ENCODE measurements at regions of chr3 and their contacts with region 1.

Region 1: DNA sequence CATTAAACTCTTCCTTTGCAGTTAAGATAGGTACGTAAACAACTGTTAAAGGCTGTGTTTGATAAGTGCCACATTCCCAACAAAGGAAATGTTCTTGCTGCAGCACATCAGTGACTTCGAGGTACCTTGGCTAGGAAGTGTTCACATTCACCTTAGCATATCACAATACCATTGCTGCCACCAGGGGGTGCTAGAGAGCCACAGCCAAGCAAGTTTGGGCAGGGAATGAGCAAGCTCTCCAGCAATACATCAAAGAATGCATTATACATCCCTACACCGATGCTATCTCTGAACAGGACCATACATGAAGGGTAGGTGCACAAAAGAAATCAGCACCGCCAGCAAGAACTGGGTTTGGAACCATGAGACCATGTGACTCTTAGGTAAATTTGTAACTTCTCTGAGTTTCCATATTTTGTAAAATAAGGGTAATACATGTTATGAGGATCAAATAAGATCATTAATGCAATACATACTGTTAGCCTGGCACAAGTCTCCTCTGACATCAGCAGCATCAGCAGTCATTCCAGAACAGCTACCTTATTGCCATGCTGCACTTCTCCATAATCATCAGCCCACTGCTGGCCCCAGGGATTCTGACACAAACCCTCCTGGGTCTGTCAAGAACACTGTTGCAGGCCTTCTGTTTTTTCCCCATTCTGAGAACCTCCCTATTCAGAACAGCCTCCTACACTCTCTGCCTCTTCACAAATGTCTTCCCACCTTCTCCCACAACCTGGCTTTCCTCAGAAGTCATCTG is 37.6 kb downstream of the RYK start:
- DNase-seq: peak; percentile 87
- H3K4me3 Mint-ChIP-seq: no peak overlapping the region
- H3K27ac Mint-ChIP-seq: peak overlapping the region; percentile 36
- H3K4me1 Mint-ChIP-seq: peaks cover 26% of the 10 kb centered on the region
- H3K27me3 Mint-ChIP-seq: no peaks in the 10 kb centered on the region
- CTCF ChIP-seq: peak; percentile 91

Region 2: DNA sequence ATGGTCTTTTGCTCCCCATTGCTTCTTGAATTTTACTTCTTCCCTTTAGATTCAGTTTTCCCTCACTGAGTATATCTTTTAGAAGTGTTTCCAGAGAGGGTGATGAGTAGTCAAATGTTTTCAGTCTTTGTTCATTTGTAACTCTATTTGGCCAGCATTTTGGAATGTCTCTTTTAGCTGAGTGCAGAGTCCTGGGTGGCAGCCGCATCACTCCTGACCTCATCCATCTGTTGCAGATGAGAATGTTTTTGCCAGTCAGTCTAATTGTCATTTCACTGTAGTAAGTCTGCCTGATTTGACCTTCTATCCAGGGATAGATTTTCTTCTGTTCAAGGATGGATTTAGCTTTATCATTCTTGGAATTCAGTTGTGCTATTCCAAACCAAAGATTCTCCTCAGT is 400.2 kb before region 1 on chr3:
- CTCF ChIA-PET with region 1: interaction called, 12 read pairs
- POLR2A ChIA-PET with region 1: no interaction called
- intact Hi-C with region 1: loop called (anchors 10 kb)
- DNase-seq: no peak
- H3K4me3 Mint-ChIP-seq: no peak overlapping the region
- H3K27ac Mint-ChIP-seq: no peak overlapping the region
- H3K4me1 Mint-ChIP-seq: peaks cover 18% of the 10 kb centered on the region
- H3K27me3 Mint-ChIP-seq: no peaks in the 10 kb centered on the region
- CTCF ChIP-seq: no peak

Region 3: GRCh38 chr3:133937756-133938601 is 275.1 kb before region 1 on chr3:
- CTCF ChIA-PET with region 1: interaction called, 68 read pairs
- POLR2A ChIA-PET with region 1: no interaction called
- intact Hi-C with region 1: no loop called
- DNase-seq: no peak
- H3K4me3 Mint-ChIP-seq: no peak overlapping the region
- H3K27ac Mint-ChIP-seq: no peak overlapping the region
- H3K4me1 Mint-ChIP-seq: peaks cover 17% of the 10 kb centered on the region
- H3K27me3 Mint-ChIP-seq: no peaks in the 10 kb centered on the region
- CTCF ChIP-seq: no peak

Region 4: DNA sequence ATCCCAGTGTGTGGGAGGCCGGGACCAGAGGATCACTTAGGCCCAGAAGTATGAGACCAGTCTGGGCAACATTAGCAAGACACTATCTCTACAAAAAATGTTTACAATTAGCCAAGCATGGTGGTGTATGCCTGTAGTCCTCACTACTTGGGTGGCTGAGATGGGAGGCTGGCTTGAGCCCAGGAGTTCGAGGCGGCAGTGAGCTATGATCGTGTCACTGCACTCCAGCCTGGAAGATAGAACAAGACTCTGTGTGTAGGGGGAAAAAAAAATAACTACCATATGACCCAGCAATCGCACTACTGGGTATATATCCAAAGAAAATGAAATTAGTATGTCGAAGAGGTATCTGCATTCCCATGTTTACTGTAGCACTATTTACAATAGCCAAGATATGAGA is 14.9 kb after region 1 on chr3:
- CTCF ChIA-PET with region 1: interaction called, 103 read pairs
- POLR2A ChIA-PET with region 1: interaction called, 14 read pairs
- intact Hi-C with region 1: no loop called
- DNase-seq: no peak
- H3K4me3 Mint-ChIP-seq: no peak overlapping the region
- H3K27ac Mint-ChIP-seq: no peak overlapping the region
- H3K4me1 Mint-ChIP-seq: peaks cover 33% of the 10 kb centered on the region
- H3K27me3 Mint-ChIP-seq: no peaks in the 10 kb centered on the region
- CTCF ChIP-seq: no peak

Region 5: DNA sequence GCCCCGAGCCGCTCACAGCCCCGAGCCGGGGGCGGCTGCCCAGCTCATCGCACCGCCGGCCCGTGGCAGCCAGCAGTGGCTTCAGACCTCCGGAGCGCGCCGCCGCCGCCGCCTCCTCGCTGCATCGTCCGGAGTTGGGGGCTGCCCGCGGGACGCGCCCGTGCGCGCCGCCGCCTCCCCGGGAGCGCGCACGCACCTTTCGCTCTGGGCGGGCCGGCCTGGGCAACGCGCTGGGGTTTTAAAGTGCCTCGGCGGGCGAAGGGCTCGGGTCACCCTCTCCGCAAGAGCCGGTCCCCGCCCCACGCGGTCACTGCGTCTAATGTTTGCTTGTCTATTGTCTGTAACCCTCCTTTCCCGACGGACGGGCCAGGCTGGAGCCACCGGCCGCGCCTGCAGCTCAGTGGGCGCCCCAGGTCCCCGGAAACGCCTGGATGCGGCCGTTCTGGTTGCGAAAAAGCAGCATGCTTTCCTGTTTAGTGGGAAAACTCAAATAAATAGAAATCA is 37.7 kb after region 1 on chr3 and contains the start of gene RYK:
- CTCF ChIA-PET with region 1: interaction called, 41 read pairs
- POLR2A ChIA-PET with region 1: interaction called, 13 read pairs
- intact Hi-C with region 1: loop called (anchors 1 kb)
- DNase-seq: peak; percentile 69
- H3K4me3 Mint-ChIP-seq: peak within 1 kb of the TSS; percentile 79
- H3K27ac Mint-ChIP-seq: peak within 1 kb of the TSS; percentile 84
- H3K4me1 Mint-ChIP-seq: peaks cover 7% of the 10 kb centered on the region
- H3K27me3 Mint-ChIP-seq: no peaks in the 10 kb centered on the region
- CTCF ChIP-seq: no peak
- total RNA-seq, gene RYK: 76.1 and 79.8 TPM in 2 replicates

Region 6: DNA sequence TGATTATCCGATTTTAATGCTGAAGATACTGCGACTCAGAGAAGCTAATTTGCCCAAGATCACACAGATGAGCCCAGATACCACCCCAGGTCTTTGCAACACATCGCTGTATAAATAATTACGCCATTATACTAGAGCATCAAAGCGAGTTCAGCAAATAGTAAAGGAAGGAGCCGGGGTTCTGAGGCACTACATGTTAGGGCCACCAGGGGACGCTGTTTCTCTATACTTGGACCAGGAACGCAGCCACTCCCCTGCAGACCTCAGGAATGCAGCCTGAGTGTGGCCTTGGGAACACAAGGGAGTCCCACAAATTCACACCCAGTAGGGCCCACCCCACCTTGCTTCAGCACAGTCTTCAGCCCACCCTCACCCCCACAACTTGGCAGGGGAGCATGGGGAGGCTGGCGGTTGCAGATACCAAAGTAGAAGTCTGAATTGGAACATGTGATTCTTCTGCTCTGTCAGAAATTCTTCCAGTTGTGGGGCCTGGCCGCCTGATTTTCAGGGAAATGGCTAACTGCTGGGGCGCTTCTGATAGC is 95.3 kb after region 1 on chr3:
- CTCF ChIA-PET with region 1: interaction called, 224 read pairs
- POLR2A ChIA-PET with region 1: interaction called, 6 read pairs
- intact Hi-C with region 1: no loop called
- DNase-seq: peak; percentile 83
- H3K4me3 Mint-ChIP-seq: no peak overlapping the region
- H3K27ac Mint-ChIP-seq: peak overlapping the region; percentile 57
- H3K4me1 Mint-ChIP-seq: peaks cover 32% of the 10 kb centered on the region
- H3K27me3 Mint-ChIP-seq: no peaks in the 10 kb centered on the region
- CTCF ChIP-seq: peak; percentile 97

Region 7: DNA sequence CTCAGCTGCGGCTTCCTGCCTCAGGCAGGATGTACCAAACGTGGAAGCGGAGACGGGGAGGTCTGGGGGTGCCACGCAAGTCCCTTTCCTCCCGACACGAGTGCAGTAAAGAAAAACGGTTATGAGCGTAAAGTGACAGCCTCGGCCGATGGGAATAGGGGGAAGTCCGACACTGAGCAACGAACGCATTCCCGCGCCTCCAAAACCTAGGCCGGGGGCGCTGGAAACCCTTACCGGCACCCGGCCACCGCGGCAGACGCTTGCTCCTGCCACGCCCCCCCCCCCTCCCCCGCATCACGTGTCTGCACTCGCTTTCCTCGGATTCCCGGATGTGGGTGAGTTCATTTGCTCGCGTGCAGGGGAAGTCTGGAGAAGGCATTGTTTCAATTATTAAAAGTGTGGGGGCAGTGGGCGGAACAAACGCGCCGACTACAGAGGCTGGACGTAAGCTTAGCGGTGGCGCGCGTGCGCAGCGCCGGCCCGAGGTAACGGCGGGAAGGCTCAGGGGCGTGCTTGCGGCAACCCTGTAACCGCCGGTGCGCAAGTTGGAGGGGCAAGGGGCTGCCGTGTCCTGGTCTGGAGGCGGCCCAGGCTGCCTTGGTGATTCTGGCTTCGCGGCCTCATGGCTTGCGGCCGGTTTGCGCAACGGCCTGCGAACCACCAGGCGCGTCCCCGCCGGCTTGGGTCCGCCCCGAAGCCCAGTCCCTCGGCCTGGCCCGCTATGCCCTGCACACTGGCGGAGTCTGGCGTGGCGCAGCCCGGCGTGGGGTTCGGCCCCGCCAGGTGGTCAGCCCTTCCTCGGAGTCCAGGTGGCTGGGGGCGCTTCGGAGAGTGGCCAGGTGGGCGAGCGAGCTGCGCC is 272.9 kb after region 1 on chr3 and contains the starts of genes ANAPC13 and CEP63:
- CTCF ChIA-PET with region 1: interaction called, 34 read pairs
- POLR2A ChIA-PET with region 1: interaction called, 8 read pairs
- intact Hi-C with region 1: loop called (anchors 5 kb)
- DNase-seq: peak; percentile 98
- H3K4me3 Mint-ChIP-seq: peak within 1 kb of the TSS; percentile 75
- H3K27ac Mint-ChIP-seq: peak within 1 kb of the TSS; percentile 87
- H3K4me1 Mint-ChIP-seq: peaks cover 31% of the 10 kb centered on the region
- H3K27me3 Mint-ChIP-seq: no peaks in the 10 kb centered on the region
- CTCF ChIP-seq: no peak
- total RNA-seq, gene ANAPC13: 61.5 and 78.4 TPM in 2 replicates
- total RNA-seq, gene CEP63: 37.0 and 40.0 TPM in 2 replicates

Region 8: DNA sequence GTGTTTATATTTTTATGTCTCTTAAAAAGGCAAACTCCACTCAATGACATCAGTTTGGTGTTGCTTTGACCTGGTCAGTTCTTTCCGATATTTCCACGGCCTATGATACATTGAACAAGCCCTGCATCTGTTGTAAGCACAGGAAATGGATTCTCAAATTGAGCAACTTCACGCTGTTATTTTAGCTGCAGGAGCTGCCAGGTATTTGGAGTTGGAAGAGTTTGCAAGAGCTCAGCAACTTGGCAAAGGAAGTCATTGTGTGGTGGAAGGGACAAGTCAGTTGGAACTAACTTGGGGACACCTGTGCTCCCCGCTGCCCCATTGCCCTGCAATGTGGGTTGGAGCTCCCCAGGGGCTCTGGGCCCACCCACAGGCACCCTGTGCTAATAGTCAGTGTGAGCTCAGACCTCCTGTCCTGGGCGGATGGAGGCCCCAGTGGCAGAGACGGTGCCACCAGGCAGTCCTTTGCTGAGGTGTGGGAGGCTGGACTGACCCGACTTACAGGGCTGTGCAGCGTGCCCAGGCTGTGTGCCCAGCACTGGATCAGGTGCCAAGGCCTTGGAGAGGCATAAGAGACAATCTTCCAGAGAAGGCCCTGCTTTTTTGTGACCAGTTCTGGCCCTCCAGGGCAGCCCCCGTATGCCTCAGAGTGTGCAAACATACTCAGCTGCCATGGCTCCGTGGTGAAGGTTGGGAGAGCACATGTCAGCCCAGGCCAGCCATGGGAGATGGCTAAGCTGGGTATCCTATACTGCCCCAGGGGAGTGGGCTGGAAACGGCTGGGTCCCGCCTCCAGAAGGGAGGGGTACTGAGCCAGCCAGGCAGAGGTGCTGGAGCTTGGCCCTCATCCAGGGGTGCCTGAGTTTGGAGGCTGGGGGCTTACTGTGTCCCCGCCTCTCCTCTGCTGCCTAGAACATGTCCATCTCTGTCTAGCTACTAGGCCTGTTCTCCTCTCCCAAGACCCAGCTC is 394.3 kb after region 1 on chr3:
- CTCF ChIA-PET with region 1: no interaction called
- POLR2A ChIA-PET with region 1: no interaction called
- intact Hi-C with region 1: no loop called
- DNase-seq: peak; percentile 56
- H3K4me3 Mint-ChIP-seq: no peak overlapping the region
- H3K27ac Mint-ChIP-seq: peak overlapping the region; percentile 50
- H3K4me1 Mint-ChIP-seq: peaks cover 9% of the 10 kb centered on the region
- H3K27me3 Mint-ChIP-seq: no peaks in the 10 kb centered on the region
- CTCF ChIP-seq: no peak

Measured in MCF 10A (cell line).